ENCODE measurements at regions of chr3 and their contacts with region 1.

Region 1: DNA sequence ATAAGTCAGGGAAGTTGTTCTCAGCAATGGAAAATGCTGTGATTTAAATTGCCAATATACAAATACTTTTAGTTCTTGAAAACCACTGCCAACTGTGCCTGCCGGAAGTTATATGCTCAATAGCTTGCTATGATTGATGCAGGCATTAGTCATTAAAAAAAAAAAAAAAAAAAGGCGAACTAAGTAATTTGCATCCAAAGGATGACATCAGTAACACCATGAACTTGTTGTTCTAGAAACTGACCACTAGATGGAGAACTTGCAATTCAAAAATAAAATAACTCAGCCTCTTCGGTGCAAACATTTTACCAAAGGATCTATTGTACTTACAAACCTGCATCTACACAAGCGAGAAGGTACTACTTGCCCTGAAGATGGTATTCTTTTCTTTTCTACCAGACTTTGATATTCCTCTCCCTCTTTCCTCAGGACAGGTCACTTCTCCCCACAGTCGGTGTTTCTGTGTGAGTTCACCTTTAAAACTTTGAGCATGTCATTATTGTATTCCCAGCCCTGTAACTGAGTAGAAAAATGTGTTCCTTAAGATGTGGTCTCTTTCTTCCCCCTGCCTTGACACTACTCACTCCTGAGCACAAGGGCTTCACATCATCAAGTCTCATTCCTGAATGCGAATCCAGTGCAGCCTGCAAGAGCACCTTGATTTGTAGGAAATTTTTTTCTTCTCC is 115.0 kb upstream of the VEPH1 start:
- DNase-seq: peak in 1 of 2 experiments; percentile 84
- H3K4me3 ChIP-seq: no peak overlapping the region
- H3K27ac ChIP-seq: no peak overlapping the region
- H3K4me1 ChIP-seq: peaks cover 6% of the 10 kb centered on the region; the same call in 1 of the 2 replicates
- H3K27me3 ChIP-seq: no peaks in the 10 kb centered on the region
- CTCF ChIP-seq: peak; percentile 78

Region 2: DNA sequence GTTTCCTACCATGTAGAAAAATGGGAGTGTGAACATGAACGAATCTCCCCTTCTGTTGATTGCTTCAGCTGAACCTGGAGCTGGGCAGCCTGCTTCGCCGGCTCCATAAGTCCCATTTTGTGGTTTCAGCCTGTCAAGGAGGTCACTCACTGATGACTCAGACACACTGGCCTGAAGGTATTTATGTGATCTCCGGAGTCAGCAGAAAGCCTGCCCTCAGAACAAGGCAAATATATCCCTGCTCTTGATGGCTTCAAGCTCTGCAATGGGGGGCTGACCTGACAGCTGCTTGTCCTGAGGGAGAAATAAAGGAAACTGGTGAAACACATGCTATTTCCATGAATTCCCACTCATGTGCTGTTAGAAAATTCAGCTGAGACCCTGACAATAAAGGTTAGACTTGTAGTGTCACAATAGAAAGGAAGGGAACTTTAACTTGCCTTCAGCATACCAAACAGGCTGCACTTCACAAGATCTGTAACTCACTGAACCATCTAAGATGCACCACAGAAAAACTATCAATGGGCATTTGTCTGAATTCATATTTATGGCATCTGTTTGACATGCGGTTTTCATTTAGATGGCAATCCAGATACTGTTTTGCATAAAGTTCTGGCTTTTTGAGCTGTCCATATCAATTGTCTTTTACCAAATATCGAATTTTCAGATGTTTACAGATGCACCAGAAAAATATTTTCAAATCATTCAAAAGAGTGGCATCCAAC is 167.0 kb after region 1 on chr3:
- CTCF ChIA-PET with region 1: no interaction called
- POLR2A ChIA-PET with region 1: no interaction called
- intact Hi-C with region 1: loop called (anchors 2 kb)
- DNase-seq: peak; percentile 73 to 92
- H3K4me3 ChIP-seq: peak overlapping the region; percentile 7; the same call in 1 of the 2 replicates
- H3K27ac ChIP-seq: peak overlapping the region; percentile 22
- H3K4me1 ChIP-seq: peaks cover 49% of the 10 kb centered on the region
- H3K27me3 ChIP-seq: no peaks in the 10 kb centered on the region
- CTCF ChIP-seq: no peak

Region 3: GRCh38 chr3:158313338-158313927 is 695.2 kb after region 1 on chr3:
- CTCF ChIA-PET with region 1: no interaction called
- POLR2A ChIA-PET with region 1: no interaction called
- intact Hi-C with region 1: loop called (anchors 2 kb)
- DNase-seq: no peak
- H3K4me3 ChIP-seq: no peak overlapping the region
- H3K27ac ChIP-seq: no peak overlapping the region
- H3K4me1 ChIP-seq: no peaks in the 10 kb centered on the region
- H3K27me3 ChIP-seq: no peaks in the 10 kb centered on the region
- CTCF ChIP-seq: peak; percentile 79

Region 4: GRCh38 chr3:158532099-158532734 is 914.0 kb after region 1 on chr3:
- CTCF ChIA-PET with region 1: no interaction called
- POLR2A ChIA-PET with region 1: no interaction called
- intact Hi-C with region 1: loop called (anchors 2 kb)
- DNase-seq: peak; percentile 14 to 36
- H3K4me3 ChIP-seq: no peak overlapping the region
- H3K27ac ChIP-seq: no peak overlapping the region
- H3K4me1 ChIP-seq: no peaks in the 10 kb centered on the region
- H3K27me3 ChIP-seq: no peaks in the 10 kb centered on the region
- CTCF ChIP-seq: peak; percentile 85

Region 5: DNA sequence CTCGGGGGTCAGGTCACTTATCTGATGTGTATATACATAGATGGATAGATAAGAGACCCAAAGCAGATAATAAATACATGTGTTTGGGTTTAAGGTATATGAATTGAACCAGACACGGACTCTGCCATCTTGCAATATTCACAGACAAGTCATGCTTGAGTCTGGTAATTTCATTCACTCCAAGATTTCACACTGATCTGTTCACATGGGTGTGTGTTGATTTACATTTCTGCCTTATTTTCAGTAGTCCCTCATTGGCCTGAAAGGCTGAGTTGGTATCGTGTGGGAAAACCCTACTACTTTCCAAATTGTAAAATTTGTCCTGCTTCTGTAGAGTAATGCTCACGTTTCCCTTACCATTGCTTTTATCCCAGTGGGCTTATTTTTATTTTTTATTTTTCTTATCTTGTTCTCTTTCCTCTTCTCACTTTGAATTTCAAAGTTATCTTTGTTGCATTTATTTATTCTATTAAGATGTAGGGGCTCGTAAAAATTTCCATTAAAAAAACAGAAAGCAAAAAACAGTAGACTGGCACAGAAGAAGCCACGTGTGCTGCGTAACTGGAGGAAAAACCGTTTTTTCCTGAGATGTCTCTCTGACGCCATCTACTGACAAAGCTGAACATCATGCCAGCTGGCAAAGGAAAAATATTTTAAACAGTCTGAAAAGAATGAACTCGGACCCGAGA is 1172.8 kb after region 1 on chr3:
- CTCF ChIA-PET with region 1: no interaction called
- POLR2A ChIA-PET with region 1: no interaction called
- intact Hi-C with region 1: loop called (anchors 5 kb)
- DNase-seq: peak in 1 of 2 experiments; percentile 64
- H3K4me3 ChIP-seq: peak overlapping the region; percentile 25; the same call in 1 of the 2 replicates
- H3K27ac ChIP-seq: no peak overlapping the region
- H3K4me1 ChIP-seq: peaks cover 59% of the 10 kb centered on the region
- H3K27me3 ChIP-seq: no peaks in the 10 kb centered on the region
- CTCF ChIP-seq: peak; percentile 90